MCF 10A (cell line): ENCODE measurements at regions of chrX and their contacts with region 1.

Region 1: DNA sequence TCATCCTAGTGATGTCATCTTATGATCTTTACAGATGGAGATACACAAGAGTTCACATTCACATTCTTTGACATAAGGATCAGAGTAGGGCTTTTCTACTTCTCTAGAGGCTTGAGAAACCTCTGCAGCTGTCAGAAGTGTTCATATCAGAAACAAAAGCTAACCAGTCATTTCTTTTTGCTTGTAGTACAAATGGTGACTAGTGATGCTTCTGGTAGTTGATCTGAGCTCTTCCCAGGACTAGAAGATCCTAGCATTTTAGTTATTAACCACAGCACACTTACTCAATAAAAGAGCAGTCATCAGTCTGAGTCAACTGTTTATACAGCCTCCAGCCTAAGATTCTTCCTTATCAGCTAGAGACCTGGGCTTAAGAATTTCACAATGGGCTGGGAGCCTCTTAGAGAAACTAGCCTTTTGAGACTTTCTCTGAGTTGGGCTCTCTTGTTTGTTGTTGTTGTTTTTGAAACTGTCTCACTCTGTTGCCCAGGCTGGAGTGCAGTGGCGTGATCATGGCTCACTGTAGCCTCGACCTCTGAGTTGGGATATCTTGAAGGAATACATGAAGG is 84.1 kb downstream of the TMEM164 start:
- DNase-seq: peak; percentile 87
- H3K4me3 Mint-ChIP-seq: peak overlapping the region; percentile 66
- H3K27ac Mint-ChIP-seq: peak overlapping the region; percentile 95
- H3K4me1 Mint-ChIP-seq: peaks cover 31% of the 10 kb centered on the region
- H3K27me3 Mint-ChIP-seq: peaks cover 36% of the 10 kb centered on the region
- CTCF ChIP-seq: no peak

Region 2: GRCh38 chrX:109911046-109911445 is 176.0 kb before region 1 on chrX:
- CTCF ChIA-PET with region 1: interaction called, 4 read pairs
- POLR2A ChIA-PET with region 1: no interaction called
- intact Hi-C with region 1: loop called (anchors 5 kb)
- DNase-seq: peak; percentile 20
- H3K4me3 Mint-ChIP-seq: no peak overlapping the region
- H3K27ac Mint-ChIP-seq: no peak overlapping the region
- H3K4me1 Mint-ChIP-seq: no peaks in the 10 kb centered on the region
- H3K27me3 Mint-ChIP-seq: peaks cover 50% of the 10 kb centered on the region
- CTCF ChIP-seq: peak; percentile 45

Region 3: DNA sequence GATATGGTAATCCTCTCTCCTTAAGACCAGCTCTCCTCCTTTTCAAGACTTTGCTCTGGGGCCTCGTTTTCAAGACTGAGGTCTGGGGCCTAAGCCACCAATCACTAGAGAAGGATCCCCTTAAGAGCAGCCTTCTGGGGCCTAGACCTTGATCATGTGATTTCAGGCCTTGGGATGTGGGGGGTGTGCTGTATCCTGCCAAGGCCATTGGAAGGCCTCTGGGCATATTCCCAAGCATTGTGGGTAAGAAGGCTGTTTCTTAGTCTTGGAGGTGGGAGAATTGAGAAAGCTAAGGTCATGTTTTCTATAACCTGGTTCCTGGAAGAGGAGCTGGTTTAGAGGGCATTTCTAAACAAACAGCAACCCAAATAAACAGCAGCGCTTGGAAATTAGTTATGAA is 72.0 kb before region 1 on chrX:
- CTCF ChIA-PET with region 1: no interaction called
- POLR2A ChIA-PET with region 1: no interaction called
- intact Hi-C with region 1: no loop called
- DNase-seq: no peak
- H3K4me3 Mint-ChIP-seq: no peak overlapping the region
- H3K27ac Mint-ChIP-seq: no peak overlapping the region
- H3K4me1 Mint-ChIP-seq: no peaks in the 10 kb centered on the region
- H3K27me3 Mint-ChIP-seq: peaks cover 41% of the 10 kb centered on the region
- CTCF ChIP-seq: no peak

Region 4: DNA sequence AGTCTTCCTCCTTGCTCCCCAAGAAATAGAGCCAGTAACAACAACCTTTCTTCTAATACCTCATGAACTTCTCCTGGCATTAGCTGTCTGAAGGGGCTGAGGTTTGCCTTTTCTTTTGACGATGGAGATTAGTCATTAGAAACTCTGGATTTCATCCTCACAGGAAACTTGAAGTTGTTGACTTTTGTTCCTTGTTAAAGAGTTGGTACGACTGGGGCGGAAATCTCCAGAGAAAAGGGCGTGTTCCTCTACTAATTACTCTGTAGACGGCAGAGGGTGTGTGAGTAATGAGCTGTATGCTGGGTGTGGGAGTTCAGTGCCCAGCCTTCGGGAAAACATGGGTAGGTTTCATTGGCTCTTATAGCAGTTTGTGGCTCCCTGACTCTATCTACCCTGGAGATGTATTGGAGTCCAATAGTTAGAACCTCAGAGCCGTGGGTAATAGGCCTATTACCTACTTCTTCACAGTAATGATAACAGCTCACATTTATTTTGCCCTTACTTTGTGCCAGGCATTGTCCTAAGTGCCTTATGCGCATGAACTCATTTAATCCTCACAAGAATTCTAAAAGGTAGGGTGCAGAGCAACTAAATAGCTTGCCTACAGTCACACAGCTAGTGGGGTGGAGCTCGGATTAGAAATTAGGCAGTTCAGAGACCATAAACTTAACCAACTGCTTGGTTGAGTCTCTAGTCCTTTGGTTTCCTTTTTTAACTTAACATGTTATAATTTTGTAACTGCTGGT is 60.7 kb before region 1 on chrX:
- CTCF ChIA-PET with region 1: no interaction called
- POLR2A ChIA-PET with region 1: interaction called, 18 read pairs
- intact Hi-C with region 1: loop called (anchors 2 kb)
- DNase-seq: peak; percentile 75
- H3K4me3 Mint-ChIP-seq: peak overlapping the region; percentile 1
- H3K27ac Mint-ChIP-seq: peak overlapping the region; percentile 81
- H3K4me1 Mint-ChIP-seq: peaks cover 9% of the 10 kb centered on the region
- H3K27me3 Mint-ChIP-seq: peaks cover 24% of the 10 kb centered on the region
- CTCF ChIP-seq: no peak

Region 5: GRCh38 chrX:110699109-110699508 is 612.1 kb after region 1 on chrX:
- CTCF ChIA-PET with region 1: no interaction called
- POLR2A ChIA-PET with region 1: no interaction called
- intact Hi-C with region 1: no loop called
- DNase-seq: peak; percentile 5
- H3K4me3 Mint-ChIP-seq: no peak overlapping the region
- H3K27ac Mint-ChIP-seq: no peak overlapping the region
- H3K4me1 Mint-ChIP-seq: no peaks in the 10 kb centered on the region
- H3K27me3 Mint-ChIP-seq: peaks cover 64% of the 10 kb centered on the region
- CTCF ChIP-seq: no peak